Activated T-helper 1 cell treated with anti-CD3 and anti-CD28 coated beads, Interleukin-12 subunit alpha, Interleukin-12 subunit beta, Interleukin-2, Interleukin-4 antibody, amounts not matched to agents 30 ng/mL and 10 ng/mL and 1 ng/mL, durations not matched to agents 14 hours and 24 hours and 36 hours (primary cell): ENCODE measurements at regions of chr2 and their contacts with region 1.

Region 1: DNA sequence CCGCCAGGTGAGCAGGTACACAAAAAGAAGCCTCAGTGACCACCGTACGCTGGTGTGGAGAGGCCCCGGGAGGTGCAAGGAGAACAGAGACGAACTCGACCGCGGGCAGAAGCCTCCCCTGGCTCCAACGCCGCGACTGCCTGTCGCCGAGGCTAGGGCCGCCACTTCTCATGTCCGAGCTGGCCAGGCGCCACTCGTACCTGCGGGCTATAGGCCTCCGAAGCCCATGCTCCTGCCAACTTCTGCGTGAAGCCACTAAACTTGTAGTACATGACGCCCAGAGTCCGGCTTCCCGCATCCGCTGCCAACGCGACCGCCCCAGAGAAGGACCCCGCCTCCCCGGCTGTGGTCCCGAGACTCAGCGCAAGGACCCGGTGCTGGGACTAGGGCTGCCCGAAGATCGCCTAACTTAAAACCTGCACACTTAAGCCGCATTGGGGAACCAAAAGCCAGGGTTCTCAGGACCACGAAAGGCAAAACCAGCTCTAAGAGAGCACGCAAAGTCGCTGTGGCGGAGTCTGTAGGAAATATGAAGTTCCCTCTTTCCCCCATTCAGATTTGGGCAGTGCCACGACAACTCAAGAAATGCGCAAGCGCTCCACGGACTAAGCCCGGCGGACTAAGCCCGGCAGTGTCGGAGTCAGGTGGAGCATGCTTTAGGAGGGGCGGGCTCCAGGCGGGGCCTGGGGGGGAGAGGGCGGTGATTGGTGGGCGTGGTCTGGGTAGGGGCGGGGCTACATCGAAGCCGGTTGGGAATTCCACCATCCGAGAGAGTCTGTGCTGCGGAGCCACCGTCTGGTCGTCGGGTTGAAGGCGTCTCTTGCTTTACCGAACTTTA is at the start of gene COX7A2L:
- DNase-seq: peak; percentile 92
- H3K4me3 Mint-ChIP-seq: peak within 1 kb of the TSS; percentile 94
- H3K27ac Mint-ChIP-seq: peak within 1 kb of the TSS; percentile 92
- H3K4me1 Mint-ChIP-seq: peaks cover 49% of the 10 kb centered on the region
- H3K27me3 Mint-ChIP-seq: no peaks in the 10 kb centered on the region
- total RNA-seq, gene COX7A2L: 83.3 and 84.7 TPM in 2 replicates

Region 2: DNA sequence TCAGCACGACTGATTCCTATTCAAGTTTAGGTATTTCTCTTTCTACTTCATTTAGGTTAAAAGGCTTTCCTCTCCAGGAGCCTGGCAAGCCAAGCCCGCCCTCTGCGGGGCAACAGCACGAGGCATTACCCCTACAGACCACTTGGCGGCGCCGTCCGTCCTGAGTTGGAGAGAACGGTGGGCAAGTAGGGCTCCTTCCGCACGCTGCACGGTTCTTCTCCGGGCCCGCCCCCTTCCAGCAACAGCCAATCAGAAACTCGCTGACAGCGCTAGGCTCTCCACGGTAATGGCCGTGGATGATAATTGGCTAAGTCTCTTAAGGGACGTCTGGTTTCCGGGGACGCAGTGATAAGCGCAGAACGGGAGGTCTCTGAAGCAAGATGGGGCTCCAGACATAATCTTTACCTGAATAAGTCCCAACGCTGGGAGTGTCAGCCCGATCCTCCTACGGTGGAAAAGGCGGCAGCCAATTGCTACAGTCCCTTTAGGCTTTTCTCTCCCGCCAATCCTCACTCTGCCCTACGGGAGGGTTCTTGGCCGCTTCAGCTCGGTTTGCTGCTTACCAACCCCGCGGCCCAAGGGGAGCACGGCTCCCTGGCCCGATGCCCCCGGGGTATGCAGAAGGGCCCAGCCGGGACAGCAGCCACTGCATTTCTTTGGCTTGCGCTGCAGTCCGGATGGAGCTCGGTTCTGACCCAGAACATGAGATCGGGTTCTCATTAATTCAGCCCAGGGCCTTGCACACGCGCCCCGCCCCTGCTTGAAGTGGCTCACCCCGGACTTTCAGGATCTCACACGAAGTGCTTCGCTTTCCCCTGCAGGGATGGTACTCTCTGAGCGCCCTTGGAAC is 520.2 kb before region 1 on chr2:
- intact Hi-C with region 1: loop called (anchors 1 kb)
- DNase-seq: peak; percentile 93
- H3K4me3 Mint-ChIP-seq: peak overlapping the region; percentile 96
- H3K27ac Mint-ChIP-seq: peak overlapping the region; percentile 83
- H3K4me1 Mint-ChIP-seq: peaks cover 8% of the 10 kb centered on the region
- H3K27me3 Mint-ChIP-seq: peaks cover 11% of the 10 kb centered on the region

Region 3: DNA sequence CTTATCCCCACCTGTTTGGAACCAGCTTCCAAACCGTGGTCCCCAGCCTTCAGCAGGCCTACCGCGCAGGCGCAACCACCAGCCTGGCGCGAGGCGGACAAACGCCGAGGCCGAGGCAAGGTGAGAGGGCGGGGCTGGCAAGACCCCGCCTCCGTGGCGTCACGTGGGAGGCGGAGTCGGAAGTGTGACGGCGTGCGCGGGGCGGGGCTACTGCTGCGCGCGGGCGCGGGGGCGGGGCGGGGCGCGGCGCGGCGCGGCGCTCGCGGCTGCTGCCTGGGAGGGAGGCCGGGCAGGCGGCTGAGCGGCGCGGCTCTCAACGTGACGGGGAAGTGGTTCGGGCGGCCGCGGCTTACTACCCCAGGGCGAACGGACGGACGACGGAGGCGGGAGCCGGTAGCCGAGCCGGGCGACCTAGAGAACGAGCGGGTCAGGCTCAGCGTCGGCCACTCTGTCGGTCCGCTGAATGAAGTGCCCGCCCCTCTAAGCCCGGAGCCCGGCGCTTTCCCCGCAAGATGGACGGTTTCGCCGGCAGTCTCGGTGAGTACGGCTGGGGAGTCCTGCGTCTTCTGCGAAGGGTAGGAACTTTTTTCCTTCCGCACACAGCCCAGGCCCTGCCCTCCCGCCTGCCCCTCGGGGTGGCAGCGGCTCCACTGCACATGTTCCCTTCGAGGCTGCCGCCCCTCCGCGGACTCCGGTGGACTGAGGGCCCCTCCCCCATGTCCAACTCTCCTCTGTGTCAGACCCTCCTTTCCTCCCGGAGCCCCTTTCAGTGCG is 191.8 kb before region 1 on chr2 and contains the start of gene EML4:
- intact Hi-C with region 1: loop called (anchors 1 kb)
- DNase-seq: peak; percentile 88
- H3K4me3 Mint-ChIP-seq: no peak within 1 kb of the TSS
- H3K27ac Mint-ChIP-seq: peak within 1 kb of the TSS; percentile 71
- H3K4me1 Mint-ChIP-seq: peaks cover 9% of the 10 kb centered on the region
- H3K27me3 Mint-ChIP-seq: peaks cover under 1% of the 10 kb centered on the region
- total RNA-seq, gene EML4: 56.7 and 58.9 TPM in 2 replicates

Region 4: GRCh38 chr2:42424033-42424432 is 62.9 kb after region 1 on chr2:
- intact Hi-C with region 1: loop called (anchors 2 kb)
- DNase-seq: no peak
- H3K4me3 Mint-ChIP-seq: no peak overlapping the region
- H3K27ac Mint-ChIP-seq: no peak overlapping the region
- H3K4me1 Mint-ChIP-seq: peaks cover 9% of the 10 kb centered on the region
- H3K27me3 Mint-ChIP-seq: no peaks in the 10 kb centered on the region

Region 5: DNA sequence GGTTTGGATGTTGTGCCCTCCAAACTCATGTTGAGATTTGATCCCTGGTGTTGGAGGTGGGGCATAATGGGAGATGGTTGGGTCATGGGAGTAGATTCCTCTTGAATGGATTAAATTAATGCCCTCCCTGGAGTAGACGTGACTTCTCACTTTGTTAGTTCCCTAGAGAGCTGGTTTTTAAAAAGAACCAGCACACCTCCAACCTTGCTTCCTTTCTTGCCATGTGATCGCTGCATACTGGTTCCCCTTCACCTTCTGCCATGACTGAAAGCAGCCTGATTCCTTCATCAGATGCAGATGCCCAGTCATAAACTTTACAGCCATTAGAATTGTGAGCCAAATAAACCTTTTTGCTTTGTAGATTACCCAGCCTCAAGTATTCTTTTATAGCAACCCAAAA is 229.1 kb after region 1 on chr2:
- intact Hi-C with region 1: no loop called
- DNase-seq: no peak
- H3K4me3 Mint-ChIP-seq: no peak overlapping the region
- H3K27ac Mint-ChIP-seq: no peak overlapping the region
- H3K4me1 Mint-ChIP-seq: peaks cover 15% of the 10 kb centered on the region
- H3K27me3 Mint-ChIP-seq: no peaks in the 10 kb centered on the region

Region 6: DNA sequence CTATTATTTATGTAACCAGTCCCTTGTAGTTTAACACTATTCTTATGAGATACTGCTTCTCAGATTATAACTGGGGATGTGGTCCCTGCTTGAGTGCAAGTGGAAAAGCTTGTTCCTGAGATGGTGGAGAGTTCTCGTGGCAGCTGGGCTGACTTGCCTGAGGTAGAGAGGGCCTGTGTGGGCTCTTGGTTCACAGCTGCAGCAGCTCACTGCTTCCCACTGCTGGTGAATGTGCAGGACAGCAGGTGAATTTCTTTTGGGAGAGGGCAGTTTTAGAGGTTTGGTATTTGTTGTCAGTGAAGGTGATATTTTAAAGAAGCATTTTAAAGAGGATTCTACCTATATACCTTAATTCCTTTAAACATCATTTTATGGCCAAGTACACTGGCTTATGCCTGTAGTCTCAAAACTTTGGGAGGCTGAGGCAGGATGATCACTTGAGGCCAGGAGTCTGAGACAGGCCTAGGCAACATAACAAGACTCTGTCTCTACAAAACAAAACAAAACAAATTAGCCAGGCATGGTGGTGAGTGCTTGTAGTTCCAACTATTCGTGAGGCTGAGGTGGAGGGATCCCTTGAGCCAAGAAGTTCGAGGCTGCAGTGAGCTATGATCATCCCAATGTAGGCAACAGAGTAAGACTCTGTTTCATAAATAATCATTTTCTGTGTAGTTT is 302.1 kb after region 1 on chr2:
- intact Hi-C with region 1: loop called (anchors 5 kb)
- DNase-seq: peak; percentile 40
- H3K4me3 Mint-ChIP-seq: no peak overlapping the region
- H3K27ac Mint-ChIP-seq: no peak overlapping the region
- H3K4me1 Mint-ChIP-seq: peaks cover 13% of the 10 kb centered on the region
- H3K27me3 Mint-ChIP-seq: no peaks in the 10 kb centered on the region

Region 7: DNA sequence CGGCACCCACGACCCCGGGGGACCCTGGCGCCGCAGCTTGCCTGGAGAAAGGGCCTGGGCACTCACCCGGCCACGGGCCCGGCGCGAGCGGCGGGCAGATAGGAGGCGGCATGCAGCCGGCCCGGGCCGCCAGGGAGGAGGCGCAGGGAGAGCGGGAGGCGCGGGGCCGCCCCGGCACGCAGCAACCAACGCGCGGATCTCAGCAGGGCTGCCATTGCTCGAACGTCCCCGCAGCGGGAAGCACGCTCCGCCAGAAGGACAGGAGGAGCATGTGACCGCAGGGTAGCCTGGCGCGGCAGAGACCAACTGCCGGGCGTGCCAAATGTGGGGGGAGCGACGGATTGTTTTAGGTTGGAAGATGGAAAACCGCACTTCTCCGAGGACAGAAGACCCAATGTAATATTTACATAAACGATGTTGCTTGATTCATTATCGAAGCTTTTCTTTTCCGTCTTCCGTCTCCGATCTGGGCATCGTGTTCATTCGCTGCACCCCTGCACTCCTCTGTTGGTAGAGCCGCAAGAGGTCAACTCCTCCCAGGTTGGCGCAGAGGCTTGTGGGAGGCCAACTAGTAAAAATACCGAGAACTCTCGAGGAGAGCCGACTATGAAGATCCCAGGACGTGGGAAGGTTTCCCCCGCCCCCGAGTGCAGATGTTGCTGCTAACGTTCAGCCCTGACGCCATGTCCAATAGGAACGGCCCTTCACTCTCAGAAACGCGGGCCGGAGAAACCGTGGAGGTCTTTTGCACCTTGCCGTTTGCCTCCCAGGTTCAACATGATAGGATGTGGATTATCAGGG is 1634.8 kb after region 1 on chr2 and contains the start of gene LRPPRC:
- intact Hi-C with region 1: loop called (anchors 2 kb)
- DNase-seq: peak; percentile 85
- H3K4me3 Mint-ChIP-seq: peak within 1 kb of the TSS; percentile 95
- H3K27ac Mint-ChIP-seq: peak within 1 kb of the TSS; percentile 94
- H3K4me1 Mint-ChIP-seq: peaks cover 45% of the 10 kb centered on the region
- H3K27me3 Mint-ChIP-seq: peaks cover 2% of the 10 kb centered on the region
- total RNA-seq, gene LRPPRC: 150 and 162 TPM in 2 replicates